ENCODE measurements at regions of chr1 and their contacts with region 1.

Region 1: DNA sequence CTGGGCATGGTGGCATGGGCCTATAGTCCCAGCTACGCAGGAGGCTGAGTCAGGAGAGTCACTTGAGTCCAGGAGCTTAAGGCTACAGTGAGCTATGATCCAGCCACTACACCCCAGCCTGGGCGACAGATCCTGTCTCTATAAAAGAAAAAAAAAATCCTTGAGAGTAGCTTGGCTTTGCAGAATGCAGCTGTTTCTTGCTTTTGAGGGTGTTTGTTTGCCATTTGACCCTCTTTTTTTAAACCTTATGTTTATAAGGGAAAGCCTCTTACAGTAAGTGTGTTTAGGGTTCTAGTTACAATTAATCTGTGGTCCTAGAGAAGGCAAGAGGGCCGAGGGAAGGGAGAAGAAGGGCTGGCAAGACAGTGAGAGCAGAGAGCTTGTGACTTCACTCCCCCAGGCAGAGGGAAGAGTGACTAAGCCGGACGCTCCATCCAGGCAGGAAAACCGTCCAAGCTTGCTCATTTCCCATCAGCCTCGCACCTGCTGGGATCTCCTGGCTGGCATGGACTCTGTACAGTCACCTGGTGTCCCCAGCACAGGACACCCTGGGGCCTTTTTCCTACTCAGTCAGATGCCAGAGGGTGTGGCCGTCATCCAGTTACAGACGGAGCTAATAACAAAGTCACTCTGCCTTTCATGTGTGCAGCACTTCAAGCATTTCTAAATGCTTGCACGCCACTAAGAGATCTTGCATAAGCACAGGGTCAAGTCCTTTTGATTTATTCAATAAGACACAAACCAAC is 55.5 kb upstream of the PSEN2 start:
- DNase-seq: peak; percentile 56 to 57
- ATAC-seq: peak; percentile 85 to 93
- H3K4me3 ChIP-seq: no peak overlapping the region
- H3K27ac ChIP-seq: peak overlapping the region; percentile 49 to 68
- H3K4me1 ChIP-seq: peaks cover 27% of the 10 kb centered on the region; the same call in 2 of the 3 replicates
- CTCF ChIP-seq: no peak
- EP300 ChIP-seq: peak in 1 of 2 experiments; percentile 52; a peak in 1 of 5 replicates
- POLR2A ChIP-seq: no peak
- RAD21 ChIP-seq: no peak

Region 2: DNA sequence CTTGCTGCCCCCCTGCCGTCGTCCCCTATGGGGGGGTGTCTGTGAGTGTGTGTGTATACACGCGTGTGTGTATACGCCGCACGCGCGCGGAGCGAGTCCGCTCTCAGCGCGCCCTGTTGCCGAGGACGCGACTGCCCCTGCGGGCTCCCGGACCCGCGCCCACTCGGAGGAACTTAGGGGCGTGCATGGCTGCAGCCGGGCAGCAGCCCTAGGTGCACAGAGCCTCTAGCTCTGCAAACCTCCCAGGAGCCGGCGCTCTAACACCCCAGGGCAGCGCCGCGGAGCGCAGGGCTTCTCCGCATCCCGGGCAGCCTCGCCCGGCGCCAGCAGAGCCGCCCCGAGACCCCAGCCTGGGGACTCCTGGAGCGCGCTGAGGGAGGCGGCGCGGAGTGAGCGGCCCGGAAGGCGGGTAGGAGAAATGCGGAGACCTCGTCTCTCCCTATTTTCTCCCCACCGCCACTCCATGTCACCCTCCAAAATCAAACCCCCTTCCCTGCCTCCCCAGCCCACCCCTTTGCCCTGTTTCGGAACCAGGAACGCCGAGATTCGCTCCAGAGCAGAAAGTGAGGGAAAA is 76.4 kb before region 1 on chr1:
- CTCF ChIA-PET with region 1: interaction called, 3 read pairs
- POLR2A ChIA-PET with region 1: interaction called, 11 read pairs
- DNase-seq: peak in 1 of 2 experiments; percentile 44
- ATAC-seq: peak; percentile 87 to 92
- H3K4me3 ChIP-seq: peak overlapping the region; percentile 58
- H3K27ac ChIP-seq: peak overlapping the region; percentile 80 to 91
- H3K4me1 ChIP-seq: 0 out of 3 replicates have a peak, but pooled peaks cover 5% of the 10 kb centered on the region
- CTCF ChIP-seq: no peak
- EP300 ChIP-seq: no peak
- POLR2A ChIP-seq: peak; percentile 32; the same call in 1 of the 2 replicates
- RAD21 ChIP-seq: peak; percentile 10 to 15; a peak in 2 of 5 replicates

Measured in A549 (cell line).